Activated T-helper 1 cell treated with anti-CD3 and anti-CD28 coated beads, Interleukin-12 subunit alpha, Interleukin-12 subunit beta, Interleukin-2, Interleukin-4 antibody, amounts not matched to agents 30 ng/mL and 10 ng/mL and 1 ng/mL, durations not matched to agents 14 hours and 24 hours and 36 hours (primary cell): ENCODE measurements at regions of chr7 and their contacts with region 1.

Region 1: GRCh38 chr7:38215735-38216670 is 38.0 kb downstream of the STARD3NL start:
- DNase-seq: peak; percentile 63
- H3K4me3 Mint-ChIP-seq: no peak overlapping the region
- H3K27ac Mint-ChIP-seq: no peak overlapping the region
- H3K4me1 Mint-ChIP-seq: peaks cover 45% of the 10 kb centered on the region
- H3K27me3 Mint-ChIP-seq: no peaks in the 10 kb centered on the region

Region 2: GRCh38 chr7:38178004-38178694 is 37.9 kb before region 1 on chr7 and contains the start of gene STARD3NL:
- intact Hi-C with region 1: loop called (anchors 1 kb)
- DNase-seq: peak; percentile 90
- H3K4me3 Mint-ChIP-seq: peak within 1 kb of the TSS; percentile 94
- H3K27ac Mint-ChIP-seq: peak within 1 kb of the TSS; percentile 87
- H3K4me1 Mint-ChIP-seq: peaks cover 46% of the 10 kb centered on the region
- H3K27me3 Mint-ChIP-seq: no peaks in the 10 kb centered on the region
- total RNA-seq, gene STARD3NL: 28.5 and 31.5 TPM in 2 replicates

Region 3: DNA sequence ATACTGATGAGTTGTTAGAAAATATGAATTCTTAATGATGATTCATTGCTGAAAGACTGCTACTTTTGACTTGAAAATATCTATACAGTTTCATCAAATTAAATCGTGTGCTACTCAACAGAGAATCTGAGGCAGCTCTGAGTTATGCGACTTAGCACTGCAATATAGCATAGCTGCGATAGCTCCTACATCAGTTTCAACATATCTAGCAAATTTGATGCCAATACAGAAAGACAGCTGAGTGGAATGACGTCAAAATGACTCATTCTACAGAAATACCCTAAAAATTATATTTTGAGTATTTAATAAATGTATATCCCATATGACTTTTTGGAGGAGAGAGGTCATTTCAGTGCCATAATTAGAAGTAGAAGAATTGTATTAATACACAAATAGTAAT is 58.5 kb after region 1 on chr7:
- intact Hi-C with region 1: no loop called
- DNase-seq: no peak
- H3K4me3 Mint-ChIP-seq: no peak overlapping the region
- H3K27ac Mint-ChIP-seq: no peak overlapping the region
- H3K4me1 Mint-ChIP-seq: no peaks in the 10 kb centered on the region
- H3K27me3 Mint-ChIP-seq: no peaks in the 10 kb centered on the region

Region 4: GRCh38 chr7:38318803-38319416 is 102.9 kb after region 1 on chr7:
- intact Hi-C with region 1: loop called (anchors 1 kb)
- DNase-seq: no peak
- H3K4me3 Mint-ChIP-seq: peak overlapping the region; percentile 38
- H3K27ac Mint-ChIP-seq: peak overlapping the region; percentile 23
- H3K4me1 Mint-ChIP-seq: peaks cover 14% of the 10 kb centered on the region
- H3K27me3 Mint-ChIP-seq: peaks cover 2% of the 10 kb centered on the region

Region 5: GRCh38 chr7:38369816-38370493 is 154.0 kb after region 1 on chr7:
- intact Hi-C with region 1: loop called (anchors 1 kb)
- DNase-seq: peak; percentile 61
- H3K4me3 Mint-ChIP-seq: no peak overlapping the region
- H3K27ac Mint-ChIP-seq: peak overlapping the region; percentile 41
- H3K4me1 Mint-ChIP-seq: peaks cover 40% of the 10 kb centered on the region
- H3K27me3 Mint-ChIP-seq: no peaks in the 10 kb centered on the region